Lower leg skin (tissue), 4 donors: ENCODE measurements at regions of chr7 and their contacts with region 1.

Region 1: GRCh38 chr7:94087664-94088352 is 83.7 kb upstream of the BET1 start:
- DNase-seq: peak in 1 of 2 donors; percentile 42
- H3K4me3 ChIP-seq: no peak overlapping the region
- CTCF ChIP-seq: no peak
- POLR2A ChIP-seq: no peak

Region 2: DNA sequence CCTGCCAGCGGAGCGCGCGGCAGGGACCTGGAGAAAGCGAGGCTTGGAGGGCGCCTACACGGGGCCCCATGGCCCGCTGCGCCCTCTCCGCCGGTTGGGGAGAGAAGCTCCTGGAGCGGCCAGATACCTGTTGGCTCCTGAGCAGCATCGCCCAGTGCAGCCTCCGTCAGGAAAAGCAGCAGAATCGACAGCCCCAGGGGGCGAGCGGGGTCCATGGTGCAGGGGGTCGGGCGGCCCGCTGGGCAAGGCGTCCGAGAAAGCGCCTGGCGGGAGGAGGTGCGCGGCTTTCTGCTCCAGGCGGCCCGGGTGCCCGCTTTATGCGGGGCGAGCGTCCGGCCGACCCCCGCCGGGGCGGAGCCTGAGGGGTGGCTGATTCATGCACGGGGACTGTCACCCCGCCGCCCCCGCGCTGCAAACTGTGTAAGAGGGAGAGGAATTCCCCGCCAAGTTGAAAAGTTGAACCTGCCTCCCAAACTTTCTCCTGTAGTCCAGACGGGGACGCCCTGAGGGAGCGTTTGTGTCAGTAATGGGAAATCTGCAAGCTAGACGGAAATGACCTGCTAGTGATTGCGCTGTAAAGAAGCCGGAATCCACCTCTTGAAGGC is 197.2 kb before region 1 on chr7 and contains the start of gene TFPI2:
- intact Hi-C with region 1: loop called (anchors 10 kb)
- DNase-seq: no peak
- H3K4me3 ChIP-seq: peak within 1 kb of the TSS; percentile 37
- CTCF ChIP-seq: no peak
- POLR2A ChIP-seq: no peak
- total RNA-seq, gene TFPI2: 0.12 to 4.2 (median 0.46) TPM in 3 of 4 donors, not detected in the other

Region 3: DNA sequence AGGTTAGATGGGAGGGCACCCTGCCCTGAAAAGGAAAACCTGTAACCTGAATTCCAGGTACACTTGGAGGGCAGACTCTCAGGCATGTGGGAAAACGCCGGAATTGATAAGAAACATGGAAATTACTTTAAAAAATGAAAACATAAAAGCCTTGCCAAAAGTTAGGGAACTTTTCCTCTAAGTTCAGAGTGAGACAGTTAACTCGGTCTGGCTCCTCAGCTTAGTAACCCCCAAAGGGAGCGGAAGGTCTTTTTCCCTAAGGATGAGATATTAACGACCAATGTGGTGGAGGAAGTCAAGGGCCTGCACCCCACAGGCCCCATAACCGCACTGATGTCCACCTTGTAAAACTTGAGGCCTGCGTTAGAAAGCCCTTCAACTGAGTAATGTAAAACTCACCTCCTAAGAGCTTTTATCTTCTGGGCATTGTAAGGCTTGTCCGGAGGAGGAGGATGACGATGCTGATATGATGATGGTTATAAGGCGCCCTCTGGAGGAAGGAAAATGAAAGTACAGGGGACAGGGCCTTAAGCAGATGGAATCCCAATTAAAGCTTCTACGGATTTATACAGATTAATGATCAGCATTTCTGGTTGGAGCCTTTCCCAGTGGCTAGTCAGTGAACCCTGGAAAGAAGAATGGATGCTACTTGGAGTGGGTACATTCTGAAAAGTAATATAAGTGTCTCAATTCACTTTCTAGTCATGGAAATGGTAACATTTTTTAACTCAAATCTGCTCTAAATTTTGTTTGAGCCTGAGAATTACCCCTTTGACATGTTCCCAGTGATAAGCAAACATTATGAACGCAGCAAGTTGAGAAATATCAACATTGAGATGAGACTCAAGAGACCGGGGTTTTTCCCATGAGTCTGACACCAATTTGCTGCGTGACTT is 307.6 kb after region 1 on chr7:
- intact Hi-C with region 1: no loop called
- DNase-seq: peak in 1 of 2 donors; percentile 70
- H3K4me3 ChIP-seq: peak overlapping the region; percentile 57
- CTCF ChIP-seq: peak in 1 of 3 donors; percentile 26
- POLR2A ChIP-seq: no peak